ENCODE measurements at regions of chr17 and their contacts with region 1.

Region 1: GRCh38 chr17:74379495-74380085 is 12.3 kb downstream of the GPR142 start:
- DNase-seq: peak; percentile 94 to 96
- ATAC-seq: peak; percentile 93 to 97 (median 96)
- H3K4me3 ChIP-seq: peak overlapping the region in 5 of 10 donors; percentile 4 to 24 (median 20)
- H3K27ac ChIP-seq: peak overlapping the region in 6 of 10 donors; percentile 36 to 56 (median 48)
- H3K4me1 ChIP-seq: peaks cover 6 to 22% (median 14%) of the 10 kb centered on the region in 9 donors
- H3K27me3 ChIP-seq: peaks cover 0 to 1% (median 0%) of the 10 kb centered on the region in 7 donors
- CTCF ChIP-seq: peak; percentile 94 to 98 (median 96)

Region 2: DNA sequence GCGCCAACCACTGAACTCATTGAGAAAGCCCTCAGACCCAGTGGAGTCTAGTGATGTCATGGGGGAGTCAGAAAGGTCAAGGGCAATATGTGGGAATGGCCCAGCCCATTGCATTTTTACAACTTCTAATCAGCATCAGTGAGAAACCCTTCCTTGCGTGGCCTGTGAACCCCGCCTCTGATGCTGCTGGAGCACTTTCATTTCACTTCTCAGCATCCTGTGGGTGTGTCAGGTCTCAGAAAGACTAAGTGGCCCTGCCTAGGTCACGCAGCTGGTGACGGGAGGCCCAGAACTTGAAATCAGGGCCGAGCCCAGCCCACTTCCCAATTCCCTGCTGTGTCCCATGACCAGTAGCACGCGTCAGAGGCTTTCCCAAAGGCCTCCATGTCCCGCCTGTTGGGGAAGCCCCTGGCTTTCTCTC is 99.5 kb before region 1 on chr17:
- intact Hi-C with region 1: no loop called
- DNase-seq: no peak
- ATAC-seq: peak in 3 of 8 donors; percentile 4 to 24 (median 19)
- H3K4me3 ChIP-seq: no peak overlapping the region
- H3K27ac ChIP-seq: peak overlapping the region in 1 of 10 donors; percentile 80
- H3K4me1 ChIP-seq: peaks cover 0 to 50% (median 21%) of the 10 kb centered on the region in 9 donors
- H3K27me3 ChIP-seq: peaks cover 0 to under 1% (median 0%) of the 10 kb centered on the region in 7 donors
- CTCF ChIP-seq: no peak

Region 3: DNA sequence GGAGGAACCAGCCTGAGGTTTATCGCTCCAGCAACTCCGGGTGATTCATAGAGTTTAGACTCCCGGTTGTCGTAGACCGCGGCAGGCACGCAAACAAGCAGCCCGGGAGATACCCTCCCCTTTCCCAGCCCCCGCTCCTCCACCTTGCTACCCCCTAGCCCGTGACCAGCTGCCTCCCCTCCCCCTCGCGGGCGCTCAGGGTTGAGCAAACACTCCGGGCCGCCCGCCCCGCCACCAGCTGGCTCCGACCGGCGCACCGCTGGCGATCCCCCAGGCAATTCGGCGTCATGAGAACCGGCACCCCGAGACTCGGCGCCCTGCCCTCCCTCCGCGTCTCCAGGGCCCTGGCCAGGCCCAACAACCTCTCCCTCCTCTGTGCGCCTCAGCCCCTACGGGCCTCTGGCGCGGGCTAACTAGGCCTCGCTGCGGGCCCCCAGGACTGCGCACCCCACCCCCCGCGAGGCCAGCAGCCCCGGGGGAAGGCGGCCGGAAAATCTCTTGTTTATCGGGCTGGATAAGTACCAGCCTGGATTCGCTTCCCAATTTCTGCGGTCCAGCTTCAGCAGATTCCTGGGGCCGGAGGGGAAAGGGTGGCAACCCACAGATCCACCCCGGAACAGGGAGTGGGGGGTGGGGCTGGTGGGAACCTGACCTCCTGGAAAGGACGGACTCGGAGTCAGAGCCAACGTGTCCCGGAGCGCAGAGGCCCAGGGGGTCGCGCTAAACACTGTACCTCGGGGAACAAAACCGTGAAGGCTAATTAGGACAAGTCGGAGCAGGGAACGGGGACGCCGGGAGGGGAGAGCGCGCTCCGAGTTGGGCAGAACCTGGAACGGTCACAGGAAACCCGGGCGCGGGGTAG is 51.3 kb after region 1 on chr17:
- intact Hi-C with region 1: loop called in 2 of 10 experiments (anchors 5 kb)
- DNase-seq: peak; percentile 85 to 86
- ATAC-seq: peak; percentile 61 to 83 (median 73)
- H3K4me3 ChIP-seq: peak overlapping the region; percentile 61 to 83 (median 74)
- H3K27ac ChIP-seq: peak overlapping the region; percentile 83 to 99 (median 96)
- H3K4me1 ChIP-seq: peaks cover 8 to 80% (median 48%) of the 10 kb centered on the region in 9 donors
- H3K27me3 ChIP-seq: peaks cover 0 to 61% (median 0%) of the 10 kb centered on the region in 7 donors
- CTCF ChIP-seq: no peak

Region 4: GRCh38 chr17:74457146-74457819 is 77.7 kb after region 1 on chr17:
- intact Hi-C with region 1: loop called (anchors 1 to 2 kb)
- DNase-seq: peak; percentile 81 to 84
- ATAC-seq: peak in 5 of 8 donors; percentile 17 to 28 (median 23)
- H3K4me3 ChIP-seq: peak overlapping the region in 3 of 10 donors; percentile 4 to 21 (median 8)
- H3K27ac ChIP-seq: peak overlapping the region in 5 of 10 donors; percentile 13 to 47 (median 28)
- H3K4me1 ChIP-seq: peaks cover 23 to 56% (median 40%) of the 10 kb centered on the region in 9 donors
- H3K27me3 ChIP-seq: peaks cover 0 to 9% (median 0%) of the 10 kb centered on the region in 7 donors
- CTCF ChIP-seq: peak; percentile 91 to 99 (median 96)

Region 5: DNA sequence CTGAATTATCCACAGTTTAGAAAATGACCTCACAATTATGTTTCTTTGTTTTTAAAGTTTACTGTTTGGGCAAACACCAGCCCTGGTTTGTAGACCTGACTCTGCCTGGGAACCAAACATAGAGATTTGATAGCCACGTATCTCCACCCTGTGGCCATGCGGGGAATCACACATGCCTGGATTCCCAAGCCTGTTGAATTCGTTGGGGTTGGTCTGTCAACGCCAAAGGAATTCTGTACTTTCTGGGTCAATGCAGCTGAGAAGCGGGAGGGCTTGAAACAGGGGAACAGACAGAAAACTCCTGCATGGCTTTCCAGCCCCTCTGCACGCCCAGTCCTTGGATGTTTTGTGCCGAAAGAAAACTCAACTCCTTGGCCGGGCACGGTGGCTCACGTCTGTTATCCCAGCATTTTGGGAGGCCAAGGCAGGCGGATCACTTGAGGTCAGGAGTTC is 113.8 kb after region 1 on chr17:
- intact Hi-C with region 1: loop called in 2 of 10 experiments (anchors 2 to 10 kb)
- DNase-seq: peak; percentile 65 to 66
- ATAC-seq: peak; percentile 64 to 85 (median 73)
- H3K4me3 ChIP-seq: no peak overlapping the region
- H3K27ac ChIP-seq: no peak overlapping the region
- H3K4me1 ChIP-seq: no peaks in the 10 kb centered on the region
- H3K27me3 ChIP-seq: peaks cover 0 to 16% (median 0%) of the 10 kb centered on the region in 7 donors
- CTCF ChIP-seq: peak; percentile 68 to 90 (median 85)

Region 6: DNA sequence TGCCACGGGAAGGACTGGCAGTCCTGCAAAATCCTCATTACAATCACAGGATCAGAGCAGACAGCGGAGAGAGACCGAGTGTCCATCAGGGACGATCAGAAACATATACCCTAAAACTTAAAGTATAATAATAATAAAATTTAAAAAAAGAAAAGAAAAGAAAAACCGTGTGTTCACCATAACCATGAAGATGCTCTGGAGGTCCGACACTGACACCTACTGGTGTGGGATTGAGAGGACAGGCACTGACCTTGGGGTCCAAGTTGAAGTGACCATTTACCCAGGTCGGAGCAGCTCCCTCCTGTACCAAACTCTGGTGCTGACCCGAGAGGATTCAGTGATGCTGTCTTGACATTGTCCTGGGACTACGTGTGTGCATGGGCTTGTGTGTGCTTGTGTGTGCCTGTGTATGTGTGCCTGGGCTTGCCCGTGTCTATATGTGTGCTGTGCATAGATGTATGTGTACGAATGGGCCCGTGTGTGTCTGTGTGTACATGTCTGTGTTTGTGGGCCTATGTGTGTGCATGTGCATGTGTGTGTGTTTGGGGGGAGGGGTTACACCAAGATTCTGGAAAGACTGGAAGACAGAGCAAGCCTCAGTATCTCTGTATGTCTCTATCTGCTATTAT is 222.5 kb after region 1 on chr17:
- intact Hi-C with region 1: loop called in 1 of 10 experiments (anchors 10 kb)
- DNase-seq: peak in 1 of 2 donors; percentile 32
- ATAC-seq: peak in 1 of 8 donors; percentile 45
- H3K4me3 ChIP-seq: no peak overlapping the region
- H3K27ac ChIP-seq: no peak overlapping the region
- H3K4me1 ChIP-seq: peaks cover 0 to 67% (median 3%) of the 10 kb centered on the region in 9 donors
- H3K27me3 ChIP-seq: peaks cover 0 to 43% (median 27%) of the 10 kb centered on the region in 7 donors
- CTCF ChIP-seq: peak in 8 of 9 donors; percentile 21 to 75 (median 60)

Measured in heart right ventricle (tissue), 16 donors.